H1 (cell line): ENCODE measurements at regions of chr13 and their contacts with region 1.

Region 1: GRCh38 chr13:97855570-97856303 is 97.7 kb upstream of the IPO5 start:
- DNase-seq: no peak
- H3K4me3 ChIP-seq: no peak overlapping the region
- H3K27ac ChIP-seq: no peak overlapping the region
- H3K4me1 ChIP-seq: peaks cover 0 to 2% (median 0%) of the 10 kb centered on the region in 4 experiments; a peak in 2 of 7 replicates
- H3K27me3 ChIP-seq: no peaks in the 10 kb centered on the region
- CTCF ChIP-seq: peak; percentile 38 to 82 (median 81)
- EP300 ChIP-seq: no peak
- POLR2A ChIP-seq: no peak
- RAD21 ChIP-seq: peak; percentile 93 to 94

Region 2: GRCh38 chr13:97810152-97810551 is 45.6 kb before region 1 on chr13:
- CTCF ChIA-PET with region 1: no interaction called
- POLR2A ChIA-PET with region 1: no interaction called
- DNase-seq: no peak
- H3K4me3 ChIP-seq: no peak overlapping the region
- H3K27ac ChIP-seq: no peak overlapping the region
- H3K4me1 ChIP-seq: no peaks in the 10 kb centered on the region
- H3K27me3 ChIP-seq: no peaks in the 10 kb centered on the region
- CTCF ChIP-seq: peak in 2 of 3 experiments; percentile 19 to 29; a peak in 2 of 4 replicates
- EP300 ChIP-seq: no peak
- POLR2A ChIP-seq: no peak
- RAD21 ChIP-seq: peak; percentile 40 to 45

Region 3: GRCh38 chr13:97834250-97834649 is 21.5 kb before region 1 on chr13:
- CTCF ChIA-PET with region 1: interaction called, 12 read pairs
- POLR2A ChIA-PET with region 1: no interaction called
- DNase-seq: no peak
- H3K4me3 ChIP-seq: no peak overlapping the region
- H3K27ac ChIP-seq: no peak overlapping the region
- H3K4me1 ChIP-seq: no peaks in the 10 kb centered on the region
- H3K27me3 ChIP-seq: no peaks in the 10 kb centered on the region
- CTCF ChIP-seq: no peak
- EP300 ChIP-seq: no peak
- POLR2A ChIP-seq: no peak
- RAD21 ChIP-seq: no peak

Region 4: DNA sequence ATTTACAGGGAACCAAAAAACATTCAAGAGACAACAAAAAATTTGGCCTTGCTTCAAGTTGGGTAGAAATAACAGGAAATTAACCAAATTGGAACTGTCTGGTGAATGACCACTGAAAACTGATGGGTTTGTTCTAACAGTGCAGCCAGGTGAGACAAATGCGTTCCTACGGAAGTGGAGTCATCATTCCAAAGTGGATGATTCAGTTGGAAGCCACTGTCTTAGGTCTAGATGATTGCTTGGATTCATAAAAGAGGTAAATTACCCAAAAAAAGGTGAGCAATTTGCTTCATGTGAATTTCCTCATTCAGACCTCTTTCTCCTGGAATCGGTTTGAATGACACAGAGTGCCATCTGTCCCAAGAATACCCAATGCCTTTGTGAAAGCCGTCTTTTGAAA is 10.6 kb after region 1 on chr13:
- CTCF ChIA-PET with region 1: interaction called, 14 read pairs
- POLR2A ChIA-PET with region 1: no interaction called
- DNase-seq: no peak
- H3K4me3 ChIP-seq: no peak overlapping the region
- H3K27ac ChIP-seq: no peak overlapping the region
- H3K4me1 ChIP-seq: no peaks in the 10 kb centered on the region
- H3K27me3 ChIP-seq: no peaks in the 10 kb centered on the region
- CTCF ChIP-seq: no peak
- EP300 ChIP-seq: no peak
- POLR2A ChIP-seq: no peak
- RAD21 ChIP-seq: no peak